ENCODE measurements at regions of chr7 and their contacts with region 1.

Region 1: GRCh38 chr7:105934572-105935185 is 28.4 kb upstream of the CDHR3 start:
- DNase-seq: peak; percentile 65
- H3K4me3 ChIP-seq: no peak overlapping the region
- H3K27ac ChIP-seq: no peak overlapping the region
- H3K4me1 ChIP-seq: peaks cover 20 to 21% of the 10 kb centered on the region in 2 experiments
- H3K27me3 ChIP-seq: no peaks in the 10 kb centered on the region
- CTCF ChIP-seq: peak; percentile 58
- EP300 ChIP-seq: no peak
- RAD21 ChIP-seq: peak; percentile 93

Region 2: DNA sequence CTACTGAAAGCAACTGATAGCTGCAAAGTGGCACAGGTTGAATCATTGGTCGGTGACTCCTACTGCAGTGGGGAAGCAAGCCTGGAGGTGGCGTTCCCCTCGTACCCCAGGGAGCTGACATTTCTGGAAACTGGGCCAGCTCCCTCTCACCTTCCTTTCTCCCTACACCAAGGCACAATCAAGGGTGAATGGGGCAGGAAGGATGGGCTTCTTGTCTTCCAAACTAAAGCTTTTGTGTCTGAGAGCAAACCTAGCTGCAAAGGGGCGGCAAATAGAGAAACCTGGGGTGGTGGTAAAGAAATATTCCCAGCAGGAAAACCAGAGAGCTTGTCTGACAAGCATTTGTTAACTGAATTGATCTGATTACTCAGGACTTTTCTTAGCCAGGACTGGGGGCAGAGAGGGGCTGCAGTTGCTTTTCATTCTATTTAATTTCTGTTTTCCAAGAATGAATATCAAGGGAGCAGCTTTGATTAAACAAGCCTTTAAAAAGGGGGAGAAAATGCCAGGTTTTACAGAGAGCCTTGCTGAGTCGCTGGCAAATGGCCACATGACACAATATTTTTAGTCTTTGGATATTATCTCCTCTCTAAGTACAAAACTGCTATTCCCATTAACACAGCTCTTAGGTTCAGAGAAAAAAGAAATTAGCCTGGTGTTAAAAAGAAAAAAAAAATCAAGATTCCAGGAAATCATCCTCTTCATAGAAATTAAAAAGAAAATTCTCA is 56.2 kb after region 1 on chr7:
- CTCF ChIA-PET with region 1: interaction called, 11 read pairs
- POLR2A ChIA-PET with region 1: no interaction called
- DNase-seq: no peak
- H3K4me3 ChIP-seq: no peak overlapping the region
- H3K27ac ChIP-seq: no peak overlapping the region
- H3K4me1 ChIP-seq: peaks cover 7 to 16% of the 10 kb centered on the region in 2 experiments
- H3K27me3 ChIP-seq: no peaks in the 10 kb centered on the region; the same call in 1 of the 2 replicates
- CTCF ChIP-seq: no peak; the same call in 1 of the 2 replicates
- EP300 ChIP-seq: no peak
- RAD21 ChIP-seq: 0 out of 2 replicates have a peak, but pooled peaks have one; percentile 1

Region 3: DNA sequence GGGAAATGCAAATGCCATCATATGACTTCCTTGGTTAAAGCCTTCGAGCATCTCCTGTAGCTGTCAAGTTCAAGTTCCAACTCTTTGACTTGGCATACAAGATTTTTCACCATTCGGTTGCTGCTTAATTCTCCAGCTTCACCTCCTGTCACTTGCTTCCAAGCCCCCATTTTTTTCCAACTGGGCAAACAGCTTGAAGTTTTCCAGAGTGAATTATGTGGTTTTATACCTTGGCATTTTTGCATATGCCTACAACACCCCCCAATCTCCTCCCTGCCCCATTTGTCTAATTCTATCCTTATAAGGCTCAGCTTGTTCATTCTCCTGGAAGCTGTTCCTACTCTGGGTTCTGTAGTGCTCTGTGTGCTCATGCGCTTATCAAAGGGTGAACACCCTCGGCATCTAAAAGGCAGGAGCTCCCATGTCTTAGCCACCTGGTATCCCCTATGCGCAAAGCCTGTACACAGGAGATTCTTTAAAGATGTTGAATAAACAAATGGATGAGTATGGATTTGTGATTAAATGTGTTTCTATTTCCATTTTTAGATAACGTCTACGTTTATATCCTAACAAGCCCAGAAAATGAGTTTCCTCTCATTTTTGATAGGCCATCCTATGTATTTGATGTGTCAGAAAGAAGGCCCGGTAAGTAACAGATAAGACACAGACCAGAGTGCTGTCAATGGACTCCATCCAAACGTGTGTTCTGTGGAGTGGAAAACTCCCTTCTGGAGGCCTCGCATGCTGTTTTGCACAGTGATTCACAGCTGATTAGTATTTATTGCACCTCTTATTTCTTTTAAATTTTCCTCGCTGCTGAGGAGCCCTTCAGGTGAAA is 80.9 kb after region 1 on chr7:
- CTCF ChIA-PET with region 1: interaction called, 21 read pairs
- POLR2A ChIA-PET with region 1: no interaction called
- DNase-seq: peak; percentile 49
- H3K4me3 ChIP-seq: no peak overlapping the region
- H3K27ac ChIP-seq: no peak overlapping the region; a peak in 1 of 4 replicates
- H3K4me1 ChIP-seq: peaks cover 4 to 31% of the 10 kb centered on the region in 2 experiments; a peak in 3 of 4 replicates
- H3K27me3 ChIP-seq: no peaks in the 10 kb centered on the region
- CTCF ChIP-seq: no peak
- EP300 ChIP-seq: peak in 1 of 2 experiments; percentile 37; a peak in 1 of 4 replicates
- RAD21 ChIP-seq: no peak

Region 4: DNA sequence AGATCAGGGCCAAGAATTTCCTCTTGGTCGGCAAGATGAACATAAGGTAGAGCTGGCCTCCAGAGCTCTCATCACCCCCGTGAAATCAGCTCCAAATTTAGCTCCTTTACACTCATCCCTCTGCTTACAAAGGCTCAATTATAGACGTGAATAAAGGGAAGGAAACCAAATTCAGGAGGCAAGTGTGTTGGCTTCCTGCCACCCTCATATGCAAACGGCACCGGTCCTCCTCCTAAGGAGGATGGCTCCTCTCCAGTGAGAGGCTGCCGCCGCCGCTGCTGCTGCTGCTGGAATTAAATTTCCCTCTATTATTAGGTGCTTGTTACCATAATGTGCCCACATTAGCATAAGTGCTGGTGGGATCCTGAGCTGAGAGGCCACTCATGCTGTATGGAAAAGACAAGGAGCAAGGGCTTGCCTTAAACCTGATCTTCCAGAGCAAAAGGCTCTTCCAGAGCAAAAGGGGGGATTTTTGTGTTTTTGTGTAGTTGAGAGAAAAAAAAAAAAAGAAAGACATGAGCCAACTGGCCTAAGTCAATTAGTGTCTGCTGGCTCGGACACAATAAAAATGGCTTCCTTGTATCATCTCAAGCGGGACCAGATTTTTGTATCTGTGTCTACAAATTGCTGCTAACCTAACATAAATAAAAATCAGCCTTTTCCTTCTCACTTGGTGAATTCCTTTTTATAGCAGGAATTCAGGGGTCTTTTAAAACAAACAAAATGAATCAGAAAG is 96.8 kb after region 1 on chr7:
- CTCF ChIA-PET with region 1: interaction called, 188 read pairs
- POLR2A ChIA-PET with region 1: no interaction called
- DNase-seq: no peak
- H3K4me3 ChIP-seq: no peak overlapping the region
- H3K27ac ChIP-seq: no peak overlapping the region; a peak in 1 of 4 replicates
- H3K4me1 ChIP-seq: peaks cover 0 to 13% of the 10 kb centered on the region in 2 experiments; a peak in 2 of 4 replicates
- H3K27me3 ChIP-seq: 0 out of 2 replicates have a peak, but pooled peaks cover 6% of the 10 kb centered on the region
- CTCF ChIP-seq: no peak
- EP300 ChIP-seq: no peak
- RAD21 ChIP-seq: no peak

Region 5: DNA sequence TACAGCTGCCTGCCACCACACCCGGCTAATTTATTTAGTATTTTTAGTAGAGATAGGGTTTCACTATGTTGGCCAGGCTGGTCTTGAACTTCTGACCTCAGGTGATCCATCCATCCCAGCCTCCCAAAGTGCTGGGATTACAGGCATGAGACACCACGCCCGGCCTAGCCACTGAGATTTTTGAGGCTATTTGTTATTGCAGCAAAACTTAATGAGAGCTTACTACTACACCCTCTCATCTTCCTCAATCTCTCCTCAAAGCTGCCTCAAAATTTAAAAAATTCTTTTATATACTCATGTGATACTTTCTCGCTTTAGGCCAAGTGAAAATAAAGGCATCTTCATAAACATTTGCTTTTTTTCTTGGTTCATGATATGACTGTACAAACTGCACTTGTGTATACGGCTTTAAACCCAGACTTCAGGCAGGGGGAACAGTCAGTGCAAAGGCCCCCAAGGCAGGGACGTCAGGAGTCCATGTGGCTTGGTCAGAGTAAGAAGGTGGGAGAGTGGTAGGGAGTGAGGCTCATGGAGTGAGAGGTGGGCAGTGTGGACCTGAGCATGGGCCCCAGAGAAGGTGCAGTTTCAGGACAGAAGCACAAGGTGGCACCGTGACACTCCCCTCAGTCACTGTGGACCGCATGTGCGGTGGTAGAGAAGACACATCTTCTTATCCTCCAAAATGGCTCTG is 122.0 kb after region 1 on chr7:
- CTCF ChIA-PET with region 1: interaction called, 22 read pairs
- POLR2A ChIA-PET with region 1: no interaction called
- DNase-seq: peak; percentile 88
- H3K4me3 ChIP-seq: no peak overlapping the region
- H3K27ac ChIP-seq: peak overlapping the region in 1 of 2 experiments; percentile 96; a peak in 2 of 4 replicates
- H3K4me1 ChIP-seq: peaks cover 0 to 28% of the 10 kb centered on the region in 2 experiments; a peak in 2 of 4 replicates
- H3K27me3 ChIP-seq: no peaks in the 10 kb centered on the region
- CTCF ChIP-seq: peak; percentile 95
- EP300 ChIP-seq: 0 out of 4 replicates have a peak, but pooled peaks of 1 of the 2 experiments have one; percentile 26
- RAD21 ChIP-seq: peak; percentile 100

Region 6: DNA sequence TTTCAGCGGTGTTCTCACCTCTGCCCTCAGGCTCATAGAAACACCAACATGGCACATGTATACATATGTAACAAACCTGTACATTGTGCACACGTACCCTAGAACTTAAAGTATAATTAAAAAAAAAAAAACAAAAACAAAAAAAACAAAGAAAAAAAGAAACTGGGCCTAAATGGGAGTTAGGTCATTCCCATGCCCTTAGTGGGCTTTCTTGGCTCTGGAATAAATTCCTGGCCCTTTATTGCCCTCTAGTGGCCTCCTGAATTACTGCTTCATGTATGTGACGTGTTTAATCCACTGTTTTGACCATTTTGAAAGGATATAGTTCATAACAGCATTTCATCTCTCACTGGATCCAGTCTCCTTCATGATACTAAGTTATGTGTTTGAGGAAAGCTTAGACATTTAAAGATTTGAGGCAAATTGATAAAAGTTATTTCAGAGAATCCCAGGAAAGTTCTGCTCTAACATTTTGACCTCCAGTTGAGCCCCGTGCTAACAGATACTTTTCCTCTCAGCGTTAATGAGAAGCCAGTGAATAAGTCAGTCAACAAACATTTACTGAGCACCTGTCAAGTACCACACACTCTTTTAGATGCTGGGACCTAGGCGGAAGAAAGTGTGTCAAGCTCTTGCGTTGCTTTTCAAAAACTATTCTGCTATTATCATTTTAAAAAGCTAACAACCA is 232.1 kb after region 1 on chr7:
- CTCF ChIA-PET with region 1: interaction called, 10 read pairs
- POLR2A ChIA-PET with region 1: no interaction called
- DNase-seq: peak; percentile 73
- H3K4me3 ChIP-seq: no peak overlapping the region; a peak in 1 of 4 replicates
- H3K27ac ChIP-seq: no peak overlapping the region
- H3K4me1 ChIP-seq: no peaks in the 10 kb centered on the region; a peak in 1 of 4 replicates
- H3K27me3 ChIP-seq: no peaks in the 10 kb centered on the region
- CTCF ChIP-seq: peak; percentile 95
- EP300 ChIP-seq: no peak
- RAD21 ChIP-seq: peak; percentile 92